HEK293T (cell line): ENCODE measurements at regions of chr11 and their contacts with region 1.

Region 1: DNA sequence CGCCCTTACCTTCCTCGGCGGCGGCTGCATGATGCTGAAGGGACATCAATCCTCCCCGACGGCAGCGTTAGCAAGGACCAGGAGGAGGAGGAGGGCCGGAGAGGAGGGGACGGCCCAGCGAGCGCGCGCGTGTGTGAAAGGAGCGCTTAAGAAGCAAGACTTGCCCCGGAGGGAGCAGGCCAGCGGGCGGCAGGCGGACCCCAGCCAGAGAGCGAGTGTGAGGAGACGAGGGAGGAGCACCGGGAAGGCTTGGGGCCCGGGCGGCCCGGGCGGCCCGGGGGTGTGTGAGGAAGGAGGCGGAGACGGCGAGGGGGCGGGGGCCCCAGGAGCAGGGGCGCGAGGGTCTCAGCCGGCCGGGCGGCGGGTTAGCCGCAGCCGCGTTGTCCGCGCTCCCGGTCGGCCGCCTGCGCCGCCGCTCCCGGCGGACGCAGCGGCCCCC is 251 bp downstream of the FCHSD2 start:
- DNase-seq: peak; percentile 53

Region 2: DNA sequence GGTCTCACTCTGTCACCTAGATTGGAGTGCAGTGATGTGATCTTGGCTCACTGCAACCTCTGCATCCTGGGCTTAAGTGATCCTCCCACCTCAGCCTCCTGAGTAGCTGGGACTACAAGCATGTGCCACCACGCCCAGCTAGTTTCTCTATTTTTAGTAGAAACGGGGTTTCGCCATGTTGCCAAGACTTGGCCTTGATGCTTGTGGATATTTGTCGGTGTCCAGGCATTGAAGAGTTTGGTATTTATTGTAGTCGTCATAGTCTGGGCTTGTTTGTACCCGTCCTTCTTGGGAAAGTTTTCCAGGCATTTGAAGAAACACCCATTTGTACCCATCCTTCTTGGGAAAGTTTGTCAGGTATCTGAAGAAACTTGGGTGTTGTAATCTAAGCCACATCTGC is 28.5 kb before region 1 on chr11:
- CTCF ChIA-PET with region 1: no interaction called
- POLR2A ChIA-PET with region 1: no interaction called
- DNase-seq: no peak

Region 3: GRCh38 chr11:73157053-73158010 is 15.5 kb after region 1 on chr11:
- CTCF ChIA-PET with region 1: interaction called, 9 read pairs
- POLR2A ChIA-PET with region 1: interaction called, 18 read pairs
- DNase-seq: no peak

Region 4: DNA sequence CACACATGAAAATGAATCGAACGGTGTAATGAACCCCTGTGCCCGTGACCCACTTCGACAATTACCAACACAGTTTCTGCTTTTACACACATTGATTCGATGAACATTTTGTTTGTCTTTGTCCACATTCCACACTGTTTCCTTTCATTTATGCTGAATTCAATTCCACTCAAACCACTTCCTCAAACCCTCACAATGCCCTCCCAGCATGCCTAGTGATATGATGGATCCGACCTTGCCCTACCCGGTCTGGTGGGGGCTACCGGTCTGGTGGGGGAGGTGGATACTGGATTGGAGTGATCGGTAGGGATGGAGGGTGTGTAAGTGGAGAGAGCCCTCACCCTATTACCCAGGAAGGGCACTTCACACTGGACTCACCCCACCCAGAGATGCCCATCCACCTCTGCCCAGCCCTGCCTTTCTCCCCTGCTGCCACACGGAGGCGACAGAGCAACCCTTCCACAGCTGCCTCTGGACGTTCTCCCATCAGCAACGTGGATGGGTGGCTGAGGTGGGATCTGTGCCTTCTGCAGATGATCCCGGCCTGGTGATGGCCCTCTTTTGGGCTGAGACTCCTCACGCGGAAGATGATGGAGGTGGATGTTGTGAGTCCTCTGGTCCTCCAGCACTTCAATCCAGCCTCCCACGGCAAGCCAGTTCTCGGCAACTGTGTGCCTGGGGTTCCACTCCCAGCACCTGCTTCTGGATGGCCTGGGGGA is 43.2 kb after region 1 on chr11:
- CTCF ChIA-PET with region 1: no interaction called
- POLR2A ChIA-PET with region 1: no interaction called
- DNase-seq: peak; percentile 80